Adrenal gland (tissue), 19 donors: ENCODE measurements at regions of chr3 and their contacts with region 1.

Region 1: GRCh38 chr3:63911873-63912767 is at the start of gene SCAANT1:
- DNase-seq: peak; percentile 89 to 95 (median 93)
- H3K4me3 ChIP-seq: peak within 1 kb of the TSS; percentile 13 to 96 (median 80)
- H3K27ac ChIP-seq: peak within 1 kb of the TSS; percentile 83 to 100 (median 99)
- H3K4me1 ChIP-seq: peaks cover 12 to 35% of the 10 kb centered on the region in 2 donors
- H3K27me3 ChIP-seq: no peaks in the 10 kb centered on the region
- CTCF ChIP-seq: peak in 5 of 6 experiments; percentile 7 to 45 (median 29)
- POLR2A ChIP-seq: peak; percentile 82 to 88
- total RNA-seq, gene SCAANT1: 1.3 TPM in 1 of 9 donors, not detected in the others

Region 2: DNA sequence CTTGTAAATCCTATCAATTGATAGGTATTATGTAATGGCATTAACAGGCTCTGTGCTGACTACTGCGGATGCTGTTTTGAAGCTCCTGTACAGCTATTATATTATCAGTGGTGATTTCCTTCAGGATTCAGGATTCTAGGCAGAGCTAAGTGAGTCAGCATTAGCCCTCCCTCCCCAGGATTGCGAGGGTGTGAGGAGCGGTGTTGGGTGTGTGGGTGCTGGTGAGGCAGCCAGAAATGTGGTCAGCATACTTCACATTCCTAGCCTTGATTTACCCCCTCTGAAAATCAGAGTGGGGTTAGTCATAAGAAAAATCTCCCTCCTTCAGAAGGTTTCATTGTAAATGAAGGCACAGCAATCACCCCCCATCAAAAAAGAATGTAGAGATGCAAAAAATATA is 187.1 kb before region 1 on chr3:
- intact Hi-C with region 1: no loop called
- DNase-seq: no peak
- H3K4me3 ChIP-seq: no peak overlapping the region
- H3K27ac ChIP-seq: no peak overlapping the region
- H3K4me1 ChIP-seq: no peaks in the 10 kb centered on the region
- H3K27me3 ChIP-seq: no peaks in the 10 kb centered on the region
- CTCF ChIP-seq: no peak
- POLR2A ChIP-seq: no peak

Region 3: GRCh38 chr3:63863148-63864007 is 48.7 kb before region 1 on chr3 and contains the starts of genes ATXN7 and THOC7:
- intact Hi-C with region 1: loop called in 1 of 2 experiments (anchors 2 kb)
- DNase-seq: peak; percentile 59 to 79 (median 67)
- H3K4me3 ChIP-seq: peak within 1 kb of the TSS; percentile 79 to 99 (median 98)
- H3K27ac ChIP-seq: peak within 1 kb of the TSS; percentile 26 to 96 (median 88)
- H3K4me1 ChIP-seq: peaks cover 7 to 15% of the 10 kb centered on the region in 2 donors
- H3K27me3 ChIP-seq: no peaks in the 10 kb centered on the region
- CTCF ChIP-seq: no peak
- POLR2A ChIP-seq: peak in 1 of 2 donors; percentile 58
- total RNA-seq, gene ATXN7: 9.6 to 27.3 (median 19.7) TPM
- total RNA-seq, gene THOC7: 34.8 to 81.3 (median 64.4) TPM

Region 4: DNA sequence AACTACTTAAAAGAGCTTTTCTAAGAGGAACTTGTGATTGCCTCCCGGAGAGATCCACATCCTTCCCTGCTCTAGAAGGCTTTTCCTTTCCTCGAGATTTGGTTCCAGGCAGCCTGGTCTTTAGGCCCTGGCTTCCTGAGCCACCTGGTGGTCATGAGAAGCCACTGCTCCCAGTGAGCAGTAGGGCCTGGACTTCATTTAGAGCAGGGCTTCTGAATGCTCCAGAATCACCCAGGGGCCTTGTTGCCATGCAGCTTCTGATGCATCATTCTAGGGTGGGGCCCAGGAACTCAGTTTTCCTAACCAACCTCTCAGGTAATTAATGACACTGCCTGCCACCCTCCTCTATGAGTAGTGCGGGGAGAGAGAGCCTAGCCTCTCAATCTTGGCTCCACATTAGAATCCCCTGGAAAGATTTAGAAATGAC is 81.5 kb after region 1 on chr3:
- intact Hi-C with region 1: loop called (anchors 10 kb)
- DNase-seq: peak; percentile 65 to 88 (median 81)
- H3K4me3 ChIP-seq: no peak overlapping the region
- H3K27ac ChIP-seq: no peak overlapping the region
- H3K4me1 ChIP-seq: peaks cover 0 to under 1% of the 10 kb centered on the region in 2 donors
- H3K27me3 ChIP-seq: no peaks in the 10 kb centered on the region
- CTCF ChIP-seq: peak; percentile 88 to 95 (median 92)
- POLR2A ChIP-seq: no peak

Region 5: GRCh38 chr3:64030741-64031140 is 118.6 kb after region 1 on chr3:
- intact Hi-C with region 1: no loop called
- DNase-seq: peak; percentile 56 to 82 (median 71)
- H3K4me3 ChIP-seq: peak overlapping the region in 1 of 4 donors; percentile 39
- H3K27ac ChIP-seq: no peak overlapping the region
- H3K4me1 ChIP-seq: peaks cover 0 to 10% of the 10 kb centered on the region in 2 donors
- H3K27me3 ChIP-seq: peaks cover 4% of the 10 kb centered on the region
- CTCF ChIP-seq: peak; percentile 76 to 95 (median 92)
- POLR2A ChIP-seq: no peak